ENCODE measurements at regions of chr7 and their contacts with region 1.

Region 1: DNA sequence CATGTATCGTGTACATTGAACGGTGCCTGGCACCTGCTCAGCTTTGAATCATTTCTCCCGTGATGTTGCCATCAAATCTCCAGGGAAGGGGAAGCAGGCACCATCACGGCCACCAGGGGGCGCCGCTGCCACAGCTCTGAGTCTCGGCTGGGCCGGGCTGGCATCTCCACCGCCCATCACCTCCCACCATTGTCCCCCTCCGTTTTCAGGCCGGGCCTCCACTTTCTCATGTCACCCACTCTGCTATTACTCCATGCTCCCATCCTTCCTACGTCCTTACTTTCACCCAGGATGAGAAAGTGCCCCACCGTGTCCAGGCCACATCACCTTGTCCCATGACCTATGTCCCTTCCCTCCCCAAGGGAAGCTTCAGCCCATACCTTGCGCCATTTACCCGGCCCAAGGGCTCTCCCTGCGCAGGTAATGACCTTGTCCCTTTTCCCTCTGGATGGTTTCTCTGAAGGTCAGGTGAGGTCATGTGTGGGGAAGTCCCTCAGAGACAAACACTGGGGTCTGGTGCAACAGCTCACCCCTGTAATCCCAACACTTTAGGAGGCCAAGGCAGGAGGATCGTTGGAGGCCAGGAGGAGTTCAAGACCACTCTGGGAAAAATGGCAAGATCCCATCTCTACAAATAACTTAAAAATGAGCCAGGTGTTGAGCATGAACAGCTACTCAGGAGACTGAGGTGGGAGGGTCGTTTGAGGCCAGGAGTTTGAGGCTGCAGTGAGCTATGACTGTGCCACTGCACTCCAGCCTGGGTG is 31.8 kb upstream of the OCM2 start:
- DNase-seq: peak; percentile 39
- ATAC-seq: peak; percentile 97
- H3K4me3 ChIP-seq: no peak overlapping the region
- H3K27ac ChIP-seq: no peak overlapping the region
- H3K4me1 ChIP-seq: no peaks in the 10 kb centered on the region
- H3K27me3 ChIP-seq: no peaks in the 10 kb centered on the region
- CTCF ChIP-seq: peak; percentile 89 to 94 (median 91)
- POLR2A ChIP-seq: no peak
- RAD21 ChIP-seq: peak; percentile 96

Region 2: DNA sequence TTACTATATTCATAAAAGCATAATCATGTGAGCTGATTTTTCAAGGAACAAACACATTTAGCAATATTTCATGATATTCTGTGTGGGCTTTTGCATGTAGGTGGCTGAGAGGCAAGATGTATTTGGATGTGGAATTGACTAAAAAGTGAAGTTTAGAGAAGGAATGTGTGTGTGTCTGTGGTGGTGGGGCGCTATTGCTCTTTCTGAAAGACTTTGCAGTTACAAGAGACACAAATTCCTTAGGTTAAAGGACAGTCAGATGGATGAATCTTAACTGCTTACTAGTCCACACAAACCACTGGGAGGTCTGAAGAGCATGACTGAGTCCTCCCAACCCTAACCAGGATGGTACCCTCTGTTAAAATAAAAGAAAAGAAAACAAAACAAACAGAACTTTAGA is 704.2 kb before region 1 on chr7:
- CTCF ChIA-PET with region 1: no interaction called
- POLR2A ChIA-PET with region 1: no interaction called
- RAD21 ChIA-PET with region 1: no interaction called
- intact Hi-C with region 1: no loop called
- DNase-seq: no peak
- ATAC-seq: no peak
- H3K4me3 ChIP-seq: no peak overlapping the region
- H3K27ac ChIP-seq: no peak overlapping the region
- H3K4me1 ChIP-seq: no peaks in the 10 kb centered on the region
- H3K27me3 ChIP-seq: peaks cover 12% of the 10 kb centered on the region
- CTCF ChIP-seq: 0 out of 6 replicates have a peak, but pooled peaks of 1 of the 3 experiments have one; percentile 4
- POLR2A ChIP-seq: no peak
- RAD21 ChIP-seq: peak; percentile 40

Region 3: DNA sequence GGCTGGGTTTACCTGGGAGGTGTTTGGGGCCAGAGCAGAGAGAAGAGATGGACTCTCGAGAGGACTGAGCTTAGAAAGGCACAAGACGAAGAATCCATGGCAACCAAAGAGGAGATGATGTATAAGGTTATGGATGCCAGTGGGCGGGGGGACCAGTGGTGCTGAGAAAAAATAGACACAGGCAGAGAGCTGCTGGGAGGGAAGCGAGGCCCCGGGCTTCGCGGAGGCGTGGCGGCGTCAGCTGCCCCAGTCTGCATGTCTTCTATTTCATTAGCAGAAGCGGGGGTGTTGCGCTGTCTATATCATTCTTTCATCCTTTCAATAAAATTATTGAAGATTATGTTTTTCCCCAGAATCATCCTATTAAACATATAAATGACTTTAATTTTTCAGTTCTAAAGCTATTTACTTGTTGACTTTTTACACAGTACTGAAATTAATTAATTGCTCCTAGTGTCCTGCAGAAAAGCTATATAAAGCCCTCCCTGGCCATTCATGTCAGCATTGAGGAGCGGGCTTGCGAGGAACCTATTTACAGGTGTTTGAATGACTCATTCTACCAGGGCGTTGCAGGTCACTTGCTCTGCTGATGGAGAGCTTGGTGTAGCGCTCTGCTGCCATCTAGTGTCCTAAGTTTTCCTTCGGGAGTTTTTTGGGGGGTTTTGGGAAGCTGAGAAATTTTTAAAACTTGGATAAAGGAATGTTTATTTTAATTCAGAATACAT is 146.6 kb after region 1 on chr7:
- CTCF ChIA-PET with region 1: interaction called, 221 read pairs
- POLR2A ChIA-PET with region 1: interaction called, 7 read pairs
- RAD21 ChIA-PET with region 1: interaction called, 14 to 19 read pairs
- intact Hi-C with region 1: loop called (anchors 1 kb)
- DNase-seq: peak; percentile 67
- ATAC-seq: peak; percentile 72
- H3K4me3 ChIP-seq: no peak overlapping the region
- H3K27ac ChIP-seq: no peak overlapping the region
- H3K4me1 ChIP-seq: peaks cover 0 to 2% of the 10 kb centered on the region in 2 experiments; a peak in 1 of 4 replicates
- H3K27me3 ChIP-seq: no peaks in the 10 kb centered on the region
- CTCF ChIP-seq: peak; percentile 80 to 85 (median 84)
- POLR2A ChIP-seq: no peak
- RAD21 ChIP-seq: peak; percentile 89

Region 4: GRCh38 chr7:98240961-98241674 is 219.3 kb after region 1 on chr7:
- CTCF ChIA-PET with region 1: no interaction called
- POLR2A ChIA-PET with region 1: no interaction called
- RAD21 ChIA-PET with region 1: no interaction called
- intact Hi-C with region 1: loop called (anchors 1 kb)
- DNase-seq: peak; percentile 18
- ATAC-seq: peak; percentile 68
- H3K4me3 ChIP-seq: no peak overlapping the region
- H3K27ac ChIP-seq: no peak overlapping the region
- H3K4me1 ChIP-seq: peaks cover 7 to 13% of the 10 kb centered on the region in 2 experiments
- H3K27me3 ChIP-seq: no peaks in the 10 kb centered on the region
- CTCF ChIP-seq: peak; percentile 64 to 90 (median 87); a peak in 5 of 6 replicates
- POLR2A ChIP-seq: no peak
- RAD21 ChIP-seq: peak; percentile 78

Measured in HCT116 (cell line).